Psoas muscle (tissue), 8 donors: ENCODE measurements at regions of chr3 and their contacts with region 1.

Region 1: DNA sequence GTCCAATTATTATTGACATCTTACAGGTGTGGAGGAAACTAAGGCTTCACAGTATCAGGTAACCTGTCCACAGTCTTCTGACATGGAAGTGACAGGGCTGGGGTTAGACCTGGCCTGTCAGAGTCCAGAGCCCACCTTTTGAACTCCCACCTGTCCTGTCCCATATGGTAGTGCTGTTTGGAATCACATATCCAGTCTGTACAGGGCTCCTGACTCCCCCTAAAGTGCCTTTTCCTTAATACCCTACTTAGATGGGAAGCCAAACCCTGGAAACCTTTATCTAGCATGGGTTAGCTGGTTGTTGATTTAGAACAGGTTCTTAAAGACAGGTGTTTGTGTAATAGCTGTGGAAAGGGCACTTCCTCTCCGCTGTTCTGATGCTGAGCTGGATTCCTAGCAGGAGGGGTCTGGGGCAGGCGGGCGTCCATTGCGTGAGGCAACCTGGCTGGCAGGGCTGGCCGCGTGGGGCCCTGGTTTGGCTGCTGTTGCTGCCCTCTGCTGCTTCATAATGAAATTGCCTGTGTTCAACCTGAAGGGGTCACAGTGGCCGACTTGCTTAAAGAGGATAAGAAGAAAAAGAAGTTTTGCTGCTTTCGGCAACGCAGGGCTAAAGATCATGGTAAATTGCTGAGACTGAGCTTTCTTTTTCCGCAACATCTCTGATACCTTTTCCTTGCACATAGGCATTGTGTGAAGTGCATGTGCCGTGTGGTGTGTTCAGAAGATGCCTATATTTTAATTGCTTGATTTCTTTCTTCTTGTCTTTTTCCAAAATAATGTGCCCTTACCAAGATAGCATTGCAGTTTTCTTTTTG is 136.2 kb downstream of the CHDH start:
- DNase-seq: peak; percentile 63 to 83
- ATAC-seq: peak; percentile 89 to 98 (median 94)
- H3K4me3 ChIP-seq: no peak overlapping the region
- H3K27ac ChIP-seq: no peak overlapping the region
- H3K4me1 ChIP-seq: no peaks in the 10 kb centered on the region
- H3K27me3 ChIP-seq: no peaks in the 10 kb centered on the region
- CTCF ChIP-seq: peak; percentile 76

Region 2: DNA sequence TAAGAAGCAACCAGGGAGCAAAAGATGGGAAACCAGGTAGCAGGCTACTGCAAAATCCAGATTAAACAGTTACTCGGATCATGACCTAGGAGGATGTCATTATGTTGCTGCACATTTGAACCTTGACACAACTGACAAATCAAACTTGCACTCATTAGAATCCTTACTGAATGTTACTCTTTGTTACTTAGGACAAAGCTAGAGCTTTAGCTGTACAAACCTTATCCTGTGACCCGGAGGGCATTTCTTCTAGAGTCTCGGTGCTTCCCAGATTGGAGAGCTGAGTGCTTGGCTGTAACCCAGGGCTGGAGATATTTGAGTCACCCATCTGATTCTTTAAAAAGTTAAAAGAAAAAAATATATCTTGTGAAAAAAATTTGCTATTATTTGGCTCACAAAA is 406.1 kb before region 1 on chr3:
- intact Hi-C with region 1: loop called (anchors 1 to 5 kb)
- DNase-seq: no peak
- ATAC-seq: no peak
- H3K4me3 ChIP-seq: no peak overlapping the region
- H3K27ac ChIP-seq: peak overlapping the region; percentile 21
- H3K4me1 ChIP-seq: peaks cover 12% of the 10 kb centered on the region
- H3K27me3 ChIP-seq: no peaks in the 10 kb centered on the region
- CTCF ChIP-seq: no peak

Region 3: DNA sequence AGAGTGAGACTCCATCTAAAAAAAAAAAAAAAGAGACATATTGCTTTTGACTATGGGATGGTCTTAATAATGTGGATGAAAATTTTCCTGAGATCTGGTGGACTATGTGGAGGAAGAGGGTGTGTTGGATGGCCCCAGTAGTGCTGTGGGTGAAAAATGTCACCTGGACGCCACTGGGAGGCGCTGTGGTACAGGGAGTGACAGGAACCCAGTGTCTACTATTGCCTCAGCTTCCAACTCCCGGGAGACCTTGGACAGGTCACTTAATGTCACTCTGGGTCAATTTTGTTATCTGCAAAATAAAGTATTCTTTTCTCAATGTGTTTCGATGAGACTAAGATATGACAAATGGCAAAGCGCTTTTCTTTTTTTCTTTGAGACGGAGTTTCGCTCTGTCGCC is 335.0 kb before region 1 on chr3:
- intact Hi-C with region 1: loop called (anchors 5 to 10 kb)
- DNase-seq: peak; percentile 50 to 73
- ATAC-seq: peak; percentile 42 to 83 (median 66)
- H3K4me3 ChIP-seq: no peak overlapping the region
- H3K27ac ChIP-seq: no peak overlapping the region
- H3K4me1 ChIP-seq: no peaks in the 10 kb centered on the region
- H3K27me3 ChIP-seq: peaks cover 0 to 3% (median 0%) of the 10 kb centered on the region in 3 donors
- CTCF ChIP-seq: peak; percentile 56

Region 4: GRCh38 chr3:53677413-53677812 is 32.7 kb before region 1 on chr3:
- intact Hi-C with region 1: loop called in 1 of 2 experiments (anchors 1 kb)
- DNase-seq: no peak
- ATAC-seq: peak in 3 of 4 donors; percentile 39 to 51 (median 50)
- H3K4me3 ChIP-seq: no peak overlapping the region
- H3K27ac ChIP-seq: no peak overlapping the region
- H3K4me1 ChIP-seq: peaks cover 1% of the 10 kb centered on the region
- H3K27me3 ChIP-seq: no peaks in the 10 kb centered on the region
- CTCF ChIP-seq: peak; percentile 31